CD4-positive, alpha-beta memory T cell (primary cell): ENCODE measurements at regions of chr12 and their contacts with region 1.

Region 1: DNA sequence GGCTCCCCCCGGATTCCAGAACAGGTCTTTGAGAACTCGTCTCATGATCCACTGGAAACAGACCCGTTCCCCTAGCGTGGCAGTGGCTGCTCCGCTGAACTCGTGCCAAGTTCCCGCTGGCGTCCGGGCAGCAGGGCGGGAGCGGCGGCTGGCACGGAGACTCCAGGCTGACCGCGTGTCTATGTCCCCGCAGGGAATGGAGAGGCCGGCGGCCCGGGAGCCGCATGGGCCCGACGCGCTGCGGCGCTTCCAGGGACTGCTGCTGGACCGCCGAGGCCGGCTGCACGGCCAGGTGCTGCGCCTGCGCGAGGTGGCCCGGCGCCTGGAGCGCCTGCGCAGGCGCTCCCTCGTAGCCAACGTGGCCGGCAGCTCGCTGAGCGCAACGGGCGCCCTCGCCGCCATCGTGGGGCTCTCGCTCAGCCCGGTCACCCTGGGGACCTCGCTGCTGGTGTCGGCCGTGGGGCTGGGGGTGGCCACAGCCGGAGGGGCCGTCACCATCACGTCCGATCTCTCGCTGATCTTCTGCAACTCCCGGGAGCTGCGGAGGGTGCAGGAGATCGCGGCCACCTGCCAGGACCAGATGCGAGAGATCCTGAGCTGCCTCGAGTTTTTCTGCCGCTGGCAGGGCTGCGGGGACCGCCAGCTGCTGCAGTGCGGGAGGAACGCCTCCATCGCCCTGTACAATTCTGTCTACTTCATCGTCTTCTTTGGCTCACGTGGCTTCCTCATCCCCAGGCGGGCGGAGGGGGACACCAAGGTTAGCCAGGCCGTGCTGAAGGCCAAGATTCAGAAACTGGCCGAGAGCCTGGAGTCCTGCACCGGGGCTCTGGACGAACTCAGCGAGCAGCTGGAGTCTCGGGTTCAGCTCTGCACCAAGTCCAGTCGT is 1.5 kb downstream of the APOLD1 start:
- DNase-seq: peak; percentile 73 to 78 (median 76)
- H3K4me3 ChIP-seq: peak overlapping the region; percentile 75 to 81
- H3K4me3 Mint-ChIP-seq: peak overlapping the region; percentile 80 to 92 (median 88)
- H3K27ac ChIP-seq: peak overlapping the region; percentile 65
- H3K27ac Mint-ChIP-seq: peak overlapping the region; percentile 48 to 90 (median 85)
- H3K4me1 ChIP-seq: peaks cover 27% of the 10 kb centered on the region
- H3K4me1 Mint-ChIP-seq: peaks cover 4 to 30% (median 10%) of the 10 kb centered on the region in 4 donors
- H3K27me3 ChIP-seq: no peaks in the 10 kb centered on the region
- H3K27me3 Mint-ChIP-seq: no peaks in the 10 kb centered on the region

Region 2: GRCh38 chr12:12797794-12798152 is 10.8 kb after region 1 on chr12:
- CTCF ChIA-PET with region 1: interaction called, 108 read pairs
- POLR2A ChIA-PET with region 1: interaction called, 57 read pairs
- intact Hi-C with region 1: no loop called
- DNase-seq: no peak
- H3K4me3 ChIP-seq: no peak overlapping the region
- H3K4me3 Mint-ChIP-seq: no peak overlapping the region
- H3K27ac ChIP-seq: no peak overlapping the region
- H3K27ac Mint-ChIP-seq: no peak overlapping the region
- H3K4me1 ChIP-seq: peaks cover 6% of the 10 kb centered on the region
- H3K4me1 Mint-ChIP-seq: peaks cover 3 to 13% (median 11%) of the 10 kb centered on the region in 4 donors
- H3K27me3 ChIP-seq: no peaks in the 10 kb centered on the region
- H3K27me3 Mint-ChIP-seq: no peaks in the 10 kb centered on the region

Region 3: DNA sequence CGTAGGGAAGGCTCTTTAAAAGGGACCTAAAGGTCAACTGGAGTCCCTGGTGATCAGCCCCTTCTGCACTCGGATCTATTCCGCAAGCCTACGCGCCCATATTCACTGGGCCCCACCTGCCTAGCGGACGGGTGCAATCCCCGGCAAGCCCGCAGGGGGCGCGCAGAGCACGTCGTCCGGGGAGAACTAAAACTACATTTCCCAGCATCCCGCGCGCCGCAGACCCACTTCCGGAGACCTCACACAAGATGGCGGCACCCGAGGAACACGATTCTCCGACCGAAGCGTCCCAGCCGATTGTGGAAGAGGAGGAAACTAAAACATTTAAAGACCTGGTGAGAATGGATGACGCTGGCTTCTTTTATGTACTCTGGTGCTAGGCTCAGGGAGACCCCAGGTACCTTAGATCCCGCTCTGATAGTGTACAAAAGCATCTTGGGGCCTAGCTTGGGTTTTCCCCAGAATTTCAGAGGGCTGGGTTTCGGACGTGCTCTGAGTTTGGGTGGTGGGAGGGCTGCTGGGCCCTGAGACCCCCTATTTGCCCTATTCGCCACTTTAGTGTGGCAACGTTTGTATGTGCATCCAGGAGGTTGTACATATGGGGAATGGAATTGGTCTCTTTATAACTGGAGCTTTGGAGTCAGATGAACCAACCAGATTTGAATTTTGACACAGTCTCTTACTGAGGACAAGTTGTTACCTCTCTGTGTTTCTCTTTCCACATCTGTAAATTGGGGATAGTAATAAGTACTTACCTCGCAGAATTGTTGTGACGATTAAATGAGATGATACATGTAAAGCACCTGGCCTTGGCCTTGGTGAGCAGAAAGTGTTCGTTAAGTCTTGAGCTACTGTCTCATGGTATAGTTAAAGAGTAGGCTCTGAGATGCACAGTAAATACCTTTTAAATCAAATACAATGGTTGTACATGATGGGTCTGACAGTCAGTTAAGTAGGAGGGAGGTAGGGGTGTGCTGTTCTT is 26.5 kb after region 1 on chr12 and contains the start of gene DDX47:
- CTCF ChIA-PET with region 1: interaction called, 96 read pairs
- POLR2A ChIA-PET with region 1: interaction called, 72 read pairs
- intact Hi-C with region 1: loop called (anchors 1 kb)
- DNase-seq: peak; percentile 93 to 97 (median 95)
- H3K4me3 ChIP-seq: peak within 1 kb of the TSS; percentile 87 to 92
- H3K4me3 Mint-ChIP-seq: peak within 1 kb of the TSS; percentile 89 to 98 (median 98)
- H3K27ac ChIP-seq: peak within 1 kb of the TSS; percentile 95
- H3K27ac Mint-ChIP-seq: peak within 1 kb of the TSS; percentile 88 to 99 (median 98)
- H3K4me1 ChIP-seq: peaks cover 53% of the 10 kb centered on the region
- H3K4me1 Mint-ChIP-seq: peaks cover 41 to 76% (median 58%) of the 10 kb centered on the region in 4 donors
- H3K27me3 ChIP-seq: no peaks in the 10 kb centered on the region
- H3K27me3 Mint-ChIP-seq: no peaks in the 10 kb centered on the region
- total RNA-seq, gene DDX47: 66.5 to 66.6 TPM

Region 4: GRCh38 chr12:12890815-12891645 is 104.1 kb after region 1 on chr12 and contains the start of gene GPRC5A:
- CTCF ChIA-PET with region 1: interaction called, 4 read pairs
- POLR2A ChIA-PET with region 1: interaction called, 3 read pairs
- intact Hi-C with region 1: loop called (anchors 5 kb)
- DNase-seq: peak; percentile 16 to 33 (median 19)
- H3K4me3 ChIP-seq: peak within 1 kb of the TSS; percentile 36 to 56
- H3K4me3 Mint-ChIP-seq: peak within 1 kb of the TSS; percentile 85 to 91 (median 88)
- H3K27ac ChIP-seq: no peak within 1 kb of the TSS
- H3K27ac Mint-ChIP-seq: peak within 1 kb of the TSS in 4 of 7 donors; percentile 4 to 74 (median 54)
- H3K4me1 ChIP-seq: peaks cover 11% of the 10 kb centered on the region
- H3K4me1 Mint-ChIP-seq: peaks cover 3 to 13% (median 5%) of the 10 kb centered on the region in 4 donors
- H3K27me3 ChIP-seq: peaks cover 6% of the 10 kb centered on the region
- H3K27me3 Mint-ChIP-seq: peaks cover 18 to 34% of the 10 kb centered on the region in 2 donors
- total RNA-seq, gene GPRC5A: not detected

Region 5: DNA sequence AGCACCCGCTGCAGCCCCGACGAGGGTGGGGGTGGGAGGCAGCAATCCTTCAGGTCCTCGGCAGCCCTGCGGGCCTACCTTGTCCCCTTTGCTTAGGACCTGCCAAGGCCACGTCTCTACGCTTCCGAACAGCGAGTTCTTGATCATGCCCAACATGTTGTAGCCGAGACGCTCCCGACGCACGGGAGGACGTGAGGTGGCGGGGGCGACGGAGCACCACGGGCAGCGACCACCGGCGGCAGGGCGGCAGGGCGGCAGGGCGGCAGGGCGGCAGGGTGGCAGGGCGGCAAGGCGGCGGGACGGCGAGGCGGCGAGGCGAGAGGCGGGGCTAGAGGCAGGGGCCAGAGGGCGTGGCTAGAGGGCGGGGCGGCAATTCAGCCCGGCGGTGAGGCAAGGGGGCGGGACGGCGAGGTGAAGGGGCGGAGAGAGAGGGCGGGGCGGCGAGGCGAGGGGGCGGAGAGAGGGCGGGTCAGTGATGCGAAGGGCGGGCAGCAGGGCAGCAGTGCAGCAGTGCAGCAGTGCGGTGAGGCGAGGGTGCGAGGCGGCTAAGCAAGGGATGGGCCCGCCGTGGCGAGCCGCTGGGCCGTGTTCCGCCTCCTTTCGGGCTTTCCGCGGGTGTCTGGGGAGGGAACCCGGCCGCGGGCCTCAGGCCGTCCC is 213.1 kb after region 1 on chr12 and contains the start of gene HEBP1:
- CTCF ChIA-PET with region 1: no interaction called
- POLR2A ChIA-PET with region 1: no interaction called
- intact Hi-C with region 1: loop called (anchors 5 kb)
- DNase-seq: peak; percentile 92 to 95 (median 93)
- H3K4me3 ChIP-seq: peak within 1 kb of the TSS; percentile 61 to 81
- H3K4me3 Mint-ChIP-seq: peak within 1 kb of the TSS; percentile 82 to 97 (median 90)
- H3K27ac ChIP-seq: peak within 1 kb of the TSS; percentile 64
- H3K27ac Mint-ChIP-seq: peak within 1 kb of the TSS; percentile 82 to 95 (median 90)
- H3K4me1 ChIP-seq: peaks cover 26% of the 10 kb centered on the region
- H3K4me1 Mint-ChIP-seq: peaks cover 20 to 44% (median 30%) of the 10 kb centered on the region in 4 donors
- H3K27me3 ChIP-seq: no peaks in the 10 kb centered on the region
- H3K27me3 Mint-ChIP-seq: no peaks in the 10 kb centered on the region
- total RNA-seq, gene HEBP1: 11.3 to 13.9 TPM